Activated T-helper 2 cell treated with anti-CD3 and anti-CD28 coated beads, Interferon-gamma antibody, Interleukin-2, Interleukin-4, amounts not matched to agents 10 μg/mL and 5 μg/mL and 100 μg/mL, durations not matched to agents 14 hours and 24 hours and 36 hours (primary cell): ENCODE measurements at regions of chr6 and their contacts with region 1.

Region 1: GRCh38 chr6:32580593-32580992 is 9.1 kb downstream of the HLA-DRB1 start:
- DNase-seq: no peak
- H3K4me3 Mint-ChIP-seq: no peak overlapping the region
- H3K27ac Mint-ChIP-seq: no peak overlapping the region
- H3K4me1 Mint-ChIP-seq: peaks cover 17% of the 10 kb centered on the region
- H3K27me3 Mint-ChIP-seq: peaks cover 9% of the 10 kb centered on the region

Region 2: GRCh38 chr6:32517654-32518445 is 62.7 kb before region 1 on chr6:
- intact Hi-C with region 1: loop called (anchors 2 kb)
- DNase-seq: no peak
- H3K4me3 Mint-ChIP-seq: no peak overlapping the region
- H3K27ac Mint-ChIP-seq: no peak overlapping the region
- H3K4me1 Mint-ChIP-seq: no peaks in the 10 kb centered on the region
- H3K27me3 Mint-ChIP-seq: peaks cover 14% of the 10 kb centered on the region

Region 3: GRCh38 chr6:32568561-32568960 is 12.0 kb before region 1 on chr6:
- intact Hi-C with region 1: no loop called
- DNase-seq: no peak
- H3K4me3 Mint-ChIP-seq: no peak overlapping the region
- H3K27ac Mint-ChIP-seq: no peak overlapping the region
- H3K4me1 Mint-ChIP-seq: peaks cover 6% of the 10 kb centered on the region
- H3K27me3 Mint-ChIP-seq: peaks cover 25% of the 10 kb centered on the region